Activated T-helper 1 cell treated with anti-CD3 and anti-CD28 coated beads, Interleukin-12 subunit alpha, Interleukin-12 subunit beta, Interleukin-2, Interleukin-4 antibody, amounts not matched to agents 30 ng/mL and 10 ng/mL and 1 ng/mL, durations not matched to agents 14 hours and 24 hours and 36 hours (primary cell): ENCODE measurements at regions of chr1 and their contacts with region 1.

Region 1: DNA sequence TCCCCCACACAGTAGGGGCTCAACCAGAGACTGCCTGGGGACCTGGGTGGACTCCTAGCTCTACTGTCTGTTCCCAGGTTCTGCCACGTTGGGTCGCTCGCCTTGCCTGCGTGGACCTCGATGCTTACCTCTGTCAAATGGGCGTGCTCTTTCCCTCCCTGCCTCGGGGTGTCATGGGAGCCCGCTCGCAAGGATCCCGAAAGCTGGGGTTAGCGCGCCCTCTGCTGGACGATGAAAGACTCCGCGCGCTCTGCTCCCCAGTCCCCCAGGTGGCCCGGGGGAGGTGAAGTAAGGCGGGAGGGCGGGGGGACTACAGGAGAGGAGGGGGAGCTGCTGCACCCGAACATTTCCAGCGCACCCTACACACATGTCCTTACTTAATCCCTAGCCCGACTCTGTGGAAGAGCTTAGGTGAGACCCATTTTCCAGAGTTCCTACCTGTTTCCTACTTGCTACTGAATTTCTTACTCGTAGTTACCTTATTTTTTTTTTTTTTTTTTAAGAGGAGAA is 2.3 kb upstream of the BSND start:
- DNase-seq: peak; percentile 70
- H3K4me3 Mint-ChIP-seq: peak overlapping the region; percentile 19
- H3K27ac Mint-ChIP-seq: no peak overlapping the region
- H3K4me1 Mint-ChIP-seq: peaks cover 19% of the 10 kb centered on the region
- H3K27me3 Mint-ChIP-seq: peaks cover 27% of the 10 kb centered on the region

Region 2: GRCh38 chr1:54671985-54672608 is 324.3 kb before region 1 on chr1:
- intact Hi-C with region 1: loop called (anchors 5 kb)
- DNase-seq: peak; percentile 59
- H3K4me3 Mint-ChIP-seq: no peak overlapping the region
- H3K27ac Mint-ChIP-seq: no peak overlapping the region
- H3K4me1 Mint-ChIP-seq: no peaks in the 10 kb centered on the region
- H3K27me3 Mint-ChIP-seq: peaks cover 6% of the 10 kb centered on the region

Region 3: DNA sequence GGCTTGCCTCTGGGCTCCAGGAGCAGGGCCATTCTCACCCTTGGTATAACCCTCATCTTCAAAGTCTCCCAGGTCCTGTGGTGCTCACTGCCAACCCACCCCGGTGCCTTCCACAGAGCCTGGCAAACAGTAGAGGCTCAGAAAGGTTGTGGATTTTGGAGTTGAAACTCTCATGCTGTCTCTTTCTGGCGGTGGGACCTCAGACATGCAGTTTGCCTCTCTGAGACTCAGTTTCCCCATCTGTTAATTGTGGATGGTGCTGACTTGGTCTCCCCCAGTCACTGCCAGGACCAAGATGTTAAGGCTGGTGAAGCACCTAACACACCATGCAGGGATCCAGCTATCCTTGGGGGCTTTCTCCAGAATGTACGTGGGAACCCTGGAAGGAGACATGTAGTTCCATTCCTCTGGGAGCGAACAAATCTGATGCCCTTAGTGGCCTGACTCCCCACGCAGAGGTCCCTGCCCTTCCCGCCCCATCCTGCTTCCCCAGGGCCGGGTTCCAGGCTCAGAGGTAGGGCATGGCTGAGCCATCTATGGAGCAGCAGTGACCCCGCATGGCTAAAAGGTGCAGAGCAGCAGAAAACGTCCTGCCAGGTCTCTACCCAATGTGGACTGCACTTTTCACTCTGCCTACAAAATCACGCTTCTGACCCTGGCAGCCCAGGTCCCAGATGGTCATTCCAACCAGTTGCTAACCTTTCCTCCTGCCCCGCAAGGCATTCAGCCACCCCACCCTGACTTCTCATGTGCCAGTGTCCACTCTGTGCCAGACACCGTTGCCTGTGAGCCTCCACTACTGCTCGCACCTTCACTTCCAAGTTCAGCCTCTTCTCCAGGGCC is 186.1 kb before region 1 on chr1:
- intact Hi-C with region 1: loop called (anchors 10 kb)
- DNase-seq: peak; percentile 56
- H3K4me3 Mint-ChIP-seq: no peak overlapping the region
- H3K27ac Mint-ChIP-seq: no peak overlapping the region
- H3K4me1 Mint-ChIP-seq: peaks cover 25% of the 10 kb centered on the region
- H3K27me3 Mint-ChIP-seq: peaks cover 8% of the 10 kb centered on the region

Region 4: DNA sequence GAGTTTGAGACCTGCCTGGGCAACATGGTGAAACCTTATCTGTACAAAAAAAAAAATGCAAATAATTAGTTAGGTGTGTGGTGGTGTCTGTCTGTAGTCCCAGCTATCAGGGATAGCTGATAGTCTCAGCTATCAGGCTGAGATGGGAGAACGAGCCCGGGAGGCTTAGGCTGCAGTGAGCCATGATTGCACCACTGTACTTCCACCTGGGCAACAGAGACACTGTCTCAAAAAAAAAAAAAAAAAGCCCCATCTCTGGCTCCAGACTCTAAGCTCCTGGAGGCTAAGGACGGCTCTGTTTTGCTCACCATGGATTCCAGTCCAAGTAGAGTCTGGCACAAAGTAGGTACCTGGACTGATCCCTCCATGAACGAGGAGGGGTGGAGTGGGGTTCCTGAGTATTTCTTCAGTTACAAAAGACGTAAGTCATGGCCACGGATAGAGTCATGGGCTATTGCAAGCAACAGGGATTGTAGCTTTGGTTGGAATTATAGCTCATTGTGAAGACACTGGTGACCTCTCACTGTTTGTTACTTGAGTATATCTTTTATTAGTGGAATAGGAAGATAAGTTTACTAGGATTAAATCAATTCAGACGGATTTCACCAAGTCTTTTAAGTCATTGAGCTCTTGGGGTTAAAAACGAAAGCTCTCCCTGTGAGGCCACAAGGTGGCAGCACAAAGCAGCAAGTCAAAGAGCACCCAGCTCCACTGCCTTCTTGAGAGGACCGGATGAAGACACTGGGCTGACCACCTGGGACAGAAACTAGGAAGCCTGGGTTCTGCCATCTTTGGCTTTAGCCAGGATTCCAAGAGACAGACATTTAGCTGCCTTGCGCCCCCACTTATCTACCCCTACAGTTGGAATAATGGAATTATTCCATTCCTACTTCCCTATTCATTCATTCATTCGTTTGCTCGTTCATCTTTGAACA is 51.5 kb before region 1 on chr1:
- intact Hi-C with region 1: loop called (anchors 1 kb)
- DNase-seq: peak; percentile 53
- H3K4me3 Mint-ChIP-seq: no peak overlapping the region
- H3K27ac Mint-ChIP-seq: peak overlapping the region; percentile 28
- H3K4me1 Mint-ChIP-seq: peaks cover 13% of the 10 kb centered on the region
- H3K27me3 Mint-ChIP-seq: peaks cover 17% of the 10 kb centered on the region

Region 5: GRCh38 chr1:54950369-54951163 is 45.8 kb before region 1 on chr1:
- intact Hi-C with region 1: loop called (anchors 1 kb)
- DNase-seq: peak; percentile 38
- H3K4me3 Mint-ChIP-seq: no peak overlapping the region
- H3K27ac Mint-ChIP-seq: no peak overlapping the region
- H3K4me1 Mint-ChIP-seq: peaks cover 17% of the 10 kb centered on the region
- H3K27me3 Mint-ChIP-seq: peaks cover 9% of the 10 kb centered on the region

Region 6: GRCh38 chr1:55021965-55022546 is 25.6 kb after region 1 on chr1:
- intact Hi-C with region 1: loop called (anchors 2 kb)
- DNase-seq: peak; percentile 43
- H3K4me3 Mint-ChIP-seq: no peak overlapping the region
- H3K27ac Mint-ChIP-seq: no peak overlapping the region
- H3K4me1 Mint-ChIP-seq: peaks cover 5% of the 10 kb centered on the region
- H3K27me3 Mint-ChIP-seq: peaks cover 2% of the 10 kb centered on the region